Psoas muscle (tissue), 8 donors: ENCODE measurements at regions of chr5 and their contacts with region 1.

Region 1: GRCh38 chr5:15499528-15500324 is at the start of gene FBXL7:
- DNase-seq: peak; percentile 81 to 82
- ATAC-seq: peak; percentile 53 to 84 (median 80)
- H3K4me3 ChIP-seq: peak within 1 kb of the TSS; percentile 69
- H3K27ac ChIP-seq: peak within 1 kb of the TSS; percentile 68
- H3K4me1 ChIP-seq: no peaks in the 10 kb centered on the region
- H3K27me3 ChIP-seq: peaks cover 0 to 25% (median 4%) of the 10 kb centered on the region in 3 donors
- CTCF ChIP-seq: no peak
- total RNA-seq, gene FBXL7: 1.6 to 7.5 (median 4.4) TPM

Region 2: DNA sequence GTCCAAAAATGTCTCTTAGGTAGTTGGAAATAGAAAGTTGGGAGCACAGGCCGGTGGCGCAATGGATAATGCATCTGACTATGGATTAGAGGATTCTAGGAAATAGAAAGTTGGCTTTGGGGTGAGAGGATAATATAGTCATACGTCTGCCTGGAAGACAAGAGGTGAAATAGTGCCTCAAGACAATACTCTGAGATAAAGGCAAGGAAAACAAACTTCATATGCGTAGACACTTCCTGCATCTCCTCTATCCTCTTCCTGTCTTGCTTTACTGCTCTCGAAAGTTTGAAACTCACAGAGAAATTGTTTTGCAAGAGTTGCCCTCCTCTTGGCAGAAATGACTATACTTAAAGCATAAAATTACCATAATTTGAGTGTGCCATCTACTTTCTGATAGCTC is 153.0 kb before region 1 on chr5:
- intact Hi-C with region 1: no loop called
- DNase-seq: no peak
- ATAC-seq: no peak
- H3K4me3 ChIP-seq: no peak overlapping the region
- H3K27ac ChIP-seq: no peak overlapping the region
- H3K4me1 ChIP-seq: no peaks in the 10 kb centered on the region
- H3K27me3 ChIP-seq: peaks cover 0 to 4% (median 0%) of the 10 kb centered on the region in 3 donors
- CTCF ChIP-seq: no peak

Region 3: DNA sequence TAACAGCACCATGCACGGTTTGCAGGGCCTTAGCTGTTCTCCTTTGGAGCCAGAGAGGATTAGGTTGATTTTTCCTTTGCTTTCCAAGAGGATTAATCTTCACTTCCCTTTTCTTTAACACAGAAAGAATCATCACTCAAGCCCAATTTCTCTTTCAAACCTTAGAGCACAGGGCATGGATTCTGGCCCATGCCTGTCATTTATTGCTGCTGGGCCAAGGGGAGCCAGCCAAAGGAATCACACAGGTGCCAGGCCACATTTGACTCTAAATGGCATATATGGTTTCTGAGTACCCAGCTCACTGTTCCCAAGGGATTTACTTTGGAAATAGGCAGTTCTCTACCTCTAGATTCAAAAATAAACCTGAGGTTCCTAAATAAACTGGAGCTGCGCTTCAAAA is 58.5 kb after region 1 on chr5:
- intact Hi-C with region 1: no loop called
- DNase-seq: no peak
- ATAC-seq: no peak
- H3K4me3 ChIP-seq: no peak overlapping the region
- H3K27ac ChIP-seq: no peak overlapping the region
- H3K4me1 ChIP-seq: no peaks in the 10 kb centered on the region
- H3K27me3 ChIP-seq: no peaks in the 10 kb centered on the region
- CTCF ChIP-seq: no peak

Region 4: DNA sequence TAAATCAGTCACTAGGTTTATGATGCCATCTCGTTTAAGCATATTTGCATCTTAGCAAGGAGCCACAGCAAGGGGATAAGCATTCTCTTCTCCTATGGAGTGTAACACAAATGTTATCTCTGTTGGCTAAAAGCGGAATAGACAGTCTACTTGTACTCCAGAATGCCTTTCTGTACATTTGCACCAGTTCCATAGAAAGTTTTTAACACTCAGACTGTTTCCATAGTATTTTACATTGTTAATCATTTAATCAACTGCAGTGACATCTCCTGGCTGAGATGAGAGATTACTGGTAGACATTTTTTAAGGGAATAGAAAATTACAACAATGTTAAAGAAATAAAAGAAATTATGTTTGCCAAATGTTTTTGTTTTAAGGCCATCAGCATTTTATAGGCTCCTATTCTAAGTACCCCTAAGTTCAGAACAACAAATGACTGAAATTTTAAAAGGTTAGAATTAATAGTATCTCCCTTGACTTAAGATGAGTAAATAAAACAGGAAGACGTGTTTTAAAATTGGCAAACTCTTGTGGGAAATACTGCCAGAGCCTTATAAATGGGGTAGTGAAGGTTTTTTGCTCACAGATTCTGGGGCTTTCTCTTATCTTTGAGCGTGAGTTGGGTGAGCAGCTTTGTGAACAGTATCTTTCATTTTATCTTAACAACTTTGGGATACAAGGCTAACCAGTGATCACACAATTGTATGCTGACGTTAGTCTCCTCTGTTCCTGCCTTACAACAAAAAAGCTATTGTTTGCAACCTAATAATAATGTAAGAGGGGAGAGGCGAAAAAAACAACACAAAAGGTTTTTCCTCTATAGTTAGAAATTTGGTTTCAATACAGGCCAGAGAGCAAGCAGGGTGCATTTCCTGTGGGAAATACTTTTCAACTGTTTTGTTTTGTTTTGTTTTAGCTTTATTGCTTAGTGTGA is 294.6 kb after region 1 on chr5:
- intact Hi-C with region 1: loop called in 1 of 2 experiments (anchors 10 kb)
- DNase-seq: no peak
- ATAC-seq: no peak
- H3K4me3 ChIP-seq: no peak overlapping the region
- H3K27ac ChIP-seq: no peak overlapping the region
- H3K4me1 ChIP-seq: peaks cover 3% of the 10 kb centered on the region
- H3K27me3 ChIP-seq: no peaks in the 10 kb centered on the region
- CTCF ChIP-seq: peak; percentile 14